ENCODE measurements at regions of chr1 and their contacts with region 1.

Region 1: DNA sequence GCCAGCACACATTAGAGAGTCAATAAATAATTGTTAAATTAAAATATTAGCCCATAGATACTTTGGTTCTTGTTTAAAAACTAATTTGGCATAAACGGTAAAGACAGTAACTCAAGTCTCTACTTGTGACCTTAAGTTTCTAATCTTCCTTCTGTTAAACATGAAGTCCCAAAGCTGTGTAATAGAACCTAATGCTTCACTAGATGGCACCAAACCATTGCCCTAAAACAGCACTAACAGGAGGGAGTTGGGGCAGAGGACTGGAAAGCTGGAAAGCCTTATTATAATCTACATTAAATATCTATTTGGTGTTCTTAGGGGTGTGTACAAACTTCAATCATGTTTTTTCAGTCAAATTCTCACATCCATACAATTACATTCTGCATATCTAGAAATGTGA is 176.7 kb downstream of the OLFM3 start:
- DNase-seq: no peak
- ATAC-seq: peak; percentile 71
- H3K4me3 ChIP-seq: no peak overlapping the region
- H3K27ac ChIP-seq: no peak overlapping the region
- H3K4me1 ChIP-seq: no peaks in the 10 kb centered on the region
- H3K27me3 ChIP-seq: no peaks in the 10 kb centered on the region
- CTCF ChIP-seq: peak; percentile 28 to 50 (median 29); a peak in 4 of 6 replicates
- EP300 ChIP-seq: no peak
- POLR2A ChIP-seq: no peak
- RAD21 ChIP-seq: peak; percentile 60

Region 2: DNA sequence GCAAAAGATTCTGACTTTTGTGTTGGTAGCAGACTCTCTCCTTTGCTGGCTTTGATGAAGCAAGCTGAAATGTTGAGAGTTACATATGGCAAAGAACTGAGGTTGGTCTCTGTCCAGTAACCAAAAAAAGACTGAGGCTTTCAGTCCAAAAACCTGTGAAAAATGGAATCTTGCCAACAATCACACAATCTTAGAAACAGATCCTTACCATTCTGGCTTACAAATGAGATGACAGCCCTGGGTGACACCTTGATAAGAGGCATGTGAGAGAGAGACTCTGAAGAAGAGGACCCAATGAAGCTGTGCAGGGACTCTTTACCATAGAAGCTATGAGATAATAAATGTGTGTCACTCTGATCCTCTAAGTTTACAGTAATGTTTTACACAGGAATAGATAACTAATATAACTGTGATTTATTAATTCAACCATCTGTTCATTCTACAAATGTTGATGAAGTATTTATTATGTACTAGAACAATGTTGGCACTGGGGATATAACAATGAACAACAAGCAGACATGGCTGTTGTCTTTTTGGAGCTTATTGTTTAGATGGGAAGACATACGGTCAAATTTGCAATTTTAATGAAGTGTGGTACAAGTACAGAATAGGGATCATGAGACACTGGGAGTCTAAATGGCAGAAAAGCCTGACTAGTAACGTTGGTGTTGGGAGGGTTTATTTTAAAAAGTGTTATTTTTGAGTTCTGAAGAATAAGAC is 74.4 kb before region 1 on chr1:
- CTCF ChIA-PET with region 1: no interaction called
- POLR2A ChIA-PET with region 1: no interaction called
- RAD21 ChIA-PET with region 1: no interaction called
- SMC1A ChIA-PET with region 1: no interaction called
- in situ Hi-C with region 1: no loop called
- intact Hi-C with region 1: no loop called
- DNase-seq: no peak
- ATAC-seq: no peak
- H3K4me3 ChIP-seq: no peak overlapping the region
- H3K27ac ChIP-seq: no peak overlapping the region
- H3K4me1 ChIP-seq: no peaks in the 10 kb centered on the region
- H3K27me3 ChIP-seq: no peaks in the 10 kb centered on the region
- CTCF ChIP-seq: no peak
- EP300 ChIP-seq: no peak
- POLR2A ChIP-seq: no peak
- RAD21 ChIP-seq: no peak

Region 3: GRCh38 chr1:102191723-102192122 is 371.7 kb after region 1 on chr1:
- CTCF ChIA-PET with region 1: no interaction called
- POLR2A ChIA-PET with region 1: no interaction called
- RAD21 ChIA-PET with region 1: no interaction called
- SMC1A ChIA-PET with region 1: no interaction called
- in situ Hi-C with region 1: no loop called
- intact Hi-C with region 1: loop called (anchors 10 kb)
- DNase-seq: peak; percentile 7
- ATAC-seq: peak; percentile 79
- H3K4me3 ChIP-seq: no peak overlapping the region
- H3K27ac ChIP-seq: no peak overlapping the region
- H3K4me1 ChIP-seq: no peaks in the 10 kb centered on the region
- H3K27me3 ChIP-seq: no peaks in the 10 kb centered on the region
- CTCF ChIP-seq: peak; percentile 18 to 58 (median 32); a peak in 3 of 6 replicates
- EP300 ChIP-seq: no peak
- POLR2A ChIP-seq: no peak
- RAD21 ChIP-seq: peak; percentile 63

Region 4: GRCh38 chr1:102434421-102434820 is 614.4 kb after region 1 on chr1:
- CTCF ChIA-PET with region 1: no interaction called
- POLR2A ChIA-PET with region 1: no interaction called
- RAD21 ChIA-PET with region 1: no interaction called
- SMC1A ChIA-PET with region 1: no interaction called
- in situ Hi-C with region 1: no loop called
- intact Hi-C with region 1: loop called (anchors 2 kb)
- DNase-seq: no peak
- ATAC-seq: peak; percentile 86
- H3K4me3 ChIP-seq: no peak overlapping the region
- H3K27ac ChIP-seq: no peak overlapping the region
- H3K4me1 ChIP-seq: no peaks in the 10 kb centered on the region
- H3K27me3 ChIP-seq: no peaks in the 10 kb centered on the region
- CTCF ChIP-seq: peak; percentile 44 to 57 (median 53); a peak in 5 of 6 replicates
- EP300 ChIP-seq: no peak
- POLR2A ChIP-seq: no peak
- RAD21 ChIP-seq: peak; percentile 58

Measured in GM12878 (cell line).